Activated CD4-positive, alpha-beta T cell treated with anti-CD3 and anti-CD28 coated beads, Interleukin-2, amount 10 ng/mL, durations not matched to agents 7 days and 5 days (primary cell): ENCODE measurements at regions of chr12 and their contacts with region 1.

Region 1: GRCh38 chr12:6890789-6891645 is 13.6 kb upstream of the LRRC23 start:
- DNase-seq: peak; percentile 98
- H3K4me3 Mint-ChIP-seq: peak overlapping the region; percentile 82
- H3K27ac Mint-ChIP-seq: peak overlapping the region; percentile 96
- H3K4me1 Mint-ChIP-seq: peaks cover 29% of the 10 kb centered on the region
- H3K27me3 Mint-ChIP-seq: no peaks in the 10 kb centered on the region

Region 2: DNA sequence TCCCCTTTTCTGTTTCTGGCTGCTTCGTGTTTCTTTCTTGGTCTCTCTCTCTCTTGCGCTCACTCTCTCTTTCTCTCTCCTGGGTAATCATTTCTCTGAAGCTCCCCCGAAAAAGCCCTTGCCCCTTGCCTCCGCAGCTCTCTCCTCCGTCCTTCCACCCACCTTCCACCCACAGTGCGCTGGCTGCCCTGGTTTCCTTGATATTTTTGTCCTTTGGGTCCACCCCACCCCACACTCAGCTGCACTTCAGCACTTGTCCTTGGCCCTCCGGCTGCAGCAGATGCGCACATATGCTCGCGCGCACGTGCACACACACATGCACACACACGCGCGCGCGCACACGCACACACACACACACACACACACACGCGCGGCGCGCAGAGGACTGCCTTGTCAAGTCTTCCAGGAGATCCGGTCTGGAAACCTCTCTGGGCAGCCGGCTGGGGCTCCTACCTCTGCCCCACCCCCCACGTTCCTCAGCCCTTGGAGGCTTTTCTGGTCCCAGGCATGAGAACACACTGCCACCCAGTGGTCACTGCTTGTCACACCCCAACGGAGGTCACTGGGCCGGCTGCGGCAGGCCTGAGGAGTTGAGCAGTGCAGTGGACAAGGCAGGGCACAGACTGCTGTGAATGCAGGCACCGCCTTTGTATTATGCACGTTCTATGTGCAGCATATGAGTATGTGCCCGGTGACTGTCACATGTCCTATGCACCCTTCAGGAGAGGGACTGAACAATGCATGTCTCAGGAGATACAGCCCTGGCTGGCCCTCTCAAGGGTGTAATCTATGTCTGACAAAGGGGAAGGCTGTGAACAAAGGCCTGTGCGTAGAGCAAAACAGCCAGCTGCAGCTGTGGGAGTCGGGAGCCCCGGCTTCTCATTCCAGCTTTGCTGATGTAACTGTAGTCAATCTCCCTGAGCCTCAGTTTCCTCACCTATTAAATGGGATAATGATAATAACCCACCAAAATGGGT is 112.2 kb before region 1 on chr12:
- CTCF ChIA-PET with region 1: no interaction called
- POLR2A ChIA-PET with region 1: no interaction called
- DNase-seq: peak; percentile 93
- H3K4me3 Mint-ChIP-seq: peak overlapping the region; percentile 70
- H3K27ac Mint-ChIP-seq: peak overlapping the region; percentile 84
- H3K4me1 Mint-ChIP-seq: peaks cover 69% of the 10 kb centered on the region
- H3K27me3 Mint-ChIP-seq: peaks cover 5% of the 10 kb centered on the region

Region 3: DNA sequence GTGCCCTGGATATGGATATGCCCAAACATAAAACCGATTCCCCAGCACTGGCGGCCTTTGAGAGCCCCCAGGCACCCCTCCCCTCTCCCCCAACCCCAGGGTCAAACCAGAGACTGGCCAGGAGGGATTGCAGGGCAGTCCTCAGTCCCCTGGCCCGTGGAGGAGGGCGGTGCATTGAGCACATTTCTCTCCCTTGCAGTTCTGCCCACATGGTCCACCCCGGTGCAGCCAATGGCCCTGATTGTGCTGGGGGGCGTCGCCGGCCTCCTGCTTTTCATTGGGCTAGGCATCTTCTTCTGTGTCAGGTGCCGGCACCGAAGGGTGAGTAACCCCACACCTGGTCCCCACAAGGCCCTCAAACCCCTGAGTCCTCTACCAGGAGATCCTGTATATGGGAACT is 72.8 kb before region 1 on chr12:
- CTCF ChIA-PET with region 1: no interaction called
- POLR2A ChIA-PET with region 1: no interaction called
- DNase-seq: no peak
- H3K4me3 Mint-ChIP-seq: no peak overlapping the region
- H3K27ac Mint-ChIP-seq: no peak overlapping the region
- H3K4me1 Mint-ChIP-seq: peaks cover 15% of the 10 kb centered on the region
- H3K27me3 Mint-ChIP-seq: peaks cover 13% of the 10 kb centered on the region

Region 4: GRCh38 chr12:6867413-6868210 is 23.4 kb before region 1 on chr12 and contains the start of gene TPI1:
- CTCF ChIA-PET with region 1: interaction called, 45 read pairs
- POLR2A ChIA-PET with region 1: interaction called, 10 read pairs
- DNase-seq: peak; percentile 76
- H3K4me3 Mint-ChIP-seq: peak within 1 kb of the TSS; percentile 93
- H3K27ac Mint-ChIP-seq: peak within 1 kb of the TSS; percentile 95
- H3K4me1 Mint-ChIP-seq: peaks cover 52% of the 10 kb centered on the region
- H3K27me3 Mint-ChIP-seq: no peaks in the 10 kb centered on the region
- total RNA-seq, gene TPI1: 918 to 1,035 TPM

Region 5: DNA sequence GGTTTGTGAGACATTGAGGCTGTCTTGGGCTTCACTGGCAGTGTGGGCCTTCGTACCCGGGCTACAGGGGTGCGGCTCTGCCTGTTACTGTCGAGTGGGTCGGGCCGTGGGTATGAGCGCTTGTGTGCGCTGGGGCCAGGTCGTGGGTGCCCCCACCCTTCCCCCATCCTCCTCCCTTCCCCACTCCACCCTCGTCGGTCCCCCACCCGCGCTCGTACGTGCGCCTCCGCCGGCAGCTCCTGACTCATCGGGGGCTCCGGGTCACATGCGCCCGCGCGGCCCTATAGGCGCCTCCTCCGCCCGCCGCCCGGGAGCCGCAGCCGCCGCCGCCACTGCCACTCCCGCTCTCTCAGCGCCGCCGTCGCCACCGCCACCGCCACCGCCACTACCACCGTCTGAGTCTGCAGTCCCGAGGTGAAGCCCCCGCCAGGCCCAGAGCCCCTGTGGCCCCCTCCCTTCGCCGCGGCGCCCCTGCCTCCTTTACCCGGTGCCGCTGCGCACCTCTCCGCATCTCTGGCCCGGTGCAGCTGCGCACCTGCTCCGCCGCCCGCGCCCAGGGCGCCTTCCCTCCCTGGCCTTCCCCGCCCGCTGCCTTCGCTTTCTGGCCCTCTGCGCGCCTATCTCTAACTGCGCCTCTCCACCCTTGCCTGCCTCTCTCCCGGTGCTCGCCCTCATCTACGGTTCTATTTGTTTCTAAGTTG is 23.4 kb after region 1 on chr12 and contains the start of gene ENO2:
- CTCF ChIA-PET with region 1: interaction called, 17 read pairs
- POLR2A ChIA-PET with region 1: interaction called, 3 read pairs
- DNase-seq: peak; percentile 78
- H3K4me3 Mint-ChIP-seq: peak within 1 kb of the TSS; percentile 84
- H3K27ac Mint-ChIP-seq: peak within 1 kb of the TSS; percentile 91
- H3K4me1 Mint-ChIP-seq: peaks cover 43% of the 10 kb centered on the region
- H3K27me3 Mint-ChIP-seq: no peaks in the 10 kb centered on the region
- total RNA-seq, gene ENO2: 156 to 160 TPM

Region 6: GRCh38 chr12:6937481-6938297 is 46.7 kb after region 1 on chr12:
- CTCF ChIA-PET with region 1: interaction called, 16 read pairs
- POLR2A ChIA-PET with region 1: no interaction called
- DNase-seq: peak; percentile 95
- H3K4me3 Mint-ChIP-seq: peak overlapping the region; percentile 81
- H3K27ac Mint-ChIP-seq: peak overlapping the region; percentile 97
- H3K4me1 Mint-ChIP-seq: peaks cover 59% of the 10 kb centered on the region
- H3K27me3 Mint-ChIP-seq: no peaks in the 10 kb centered on the region

Region 7: DNA sequence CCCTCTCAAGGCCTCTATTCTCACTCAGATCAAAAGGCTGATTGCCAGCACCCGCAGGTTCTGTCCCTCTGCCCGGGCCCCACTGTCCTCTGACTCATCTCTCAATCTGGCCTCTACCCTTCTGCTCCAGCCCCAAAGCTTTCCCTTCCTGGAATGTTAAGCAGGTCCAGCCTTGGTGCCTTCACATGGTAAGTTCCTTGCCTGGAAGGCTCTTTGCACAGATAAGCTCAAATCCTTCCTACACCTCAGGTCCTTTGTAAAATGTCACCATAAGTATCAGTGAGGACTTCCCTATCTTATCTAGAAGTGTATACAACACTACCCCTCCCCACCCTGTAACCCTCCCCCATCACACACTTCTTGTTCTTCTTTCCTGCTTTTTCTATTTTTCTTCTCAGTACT is 105.0 kb after region 1 on chr12:
- CTCF ChIA-PET with region 1: no interaction called
- POLR2A ChIA-PET with region 1: no interaction called
- DNase-seq: no peak
- H3K4me3 Mint-ChIP-seq: no peak overlapping the region
- H3K27ac Mint-ChIP-seq: no peak overlapping the region
- H3K4me1 Mint-ChIP-seq: no peaks in the 10 kb centered on the region
- H3K27me3 Mint-ChIP-seq: no peaks in the 10 kb centered on the region

Region 8: GRCh38 chr12:7108796-7109571 is 218.0 kb after region 1 on chr12 and contains the start of gene C1RL:
- CTCF ChIA-PET with region 1: interaction called, 14 read pairs
- POLR2A ChIA-PET with region 1: no interaction called
- DNase-seq: peak; percentile 76
- H3K4me3 Mint-ChIP-seq: peak within 1 kb of the TSS; percentile 96
- H3K27ac Mint-ChIP-seq: peak within 1 kb of the TSS; percentile 96
- H3K4me1 Mint-ChIP-seq: peaks cover 68% of the 10 kb centered on the region
- H3K27me3 Mint-ChIP-seq: no peaks in the 10 kb centered on the region
- total RNA-seq, gene C1RL: 31.2 to 31.4 TPM